Prostate gland (tissue), 2 donors: ENCODE measurements at regions of chr1 and their contacts with region 1.

Region 1: GRCh38 chr1:156129706-156130581 is 15.4 kb downstream of the LMNA start:
- DNase-seq: peak; percentile 82
- H3K4me3 ChIP-seq: no peak overlapping the region
- H3K27ac ChIP-seq: peak overlapping the region; percentile 80 to 86
- H3K4me1 ChIP-seq: peaks cover 23% of the 10 kb centered on the region
- H3K27me3 ChIP-seq: no peaks in the 10 kb centered on the region
- CTCF ChIP-seq: peak; percentile 90 to 100 (median 97)
- POLR2A ChIP-seq: peak; percentile 51

Region 2: GRCh38 chr1:156060937-156061636 is 68.9 kb before region 1 on chr1 and contains the start of gene RAB25:
- intact Hi-C with region 1: no loop called
- DNase-seq: peak; percentile 92
- H3K4me3 ChIP-seq: peak within 1 kb of the TSS; percentile 30 to 35
- H3K27ac ChIP-seq: peak within 1 kb of the TSS; percentile 81
- H3K4me1 ChIP-seq: no peaks in the 10 kb centered on the region
- H3K27me3 ChIP-seq: no peaks in the 10 kb centered on the region
- CTCF ChIP-seq: peak in 1 of 4 experiments; percentile 19
- POLR2A ChIP-seq: peak; percentile 86
- total RNA-seq, gene RAB25: 33.5 to 100 TPM

Region 3: DNA sequence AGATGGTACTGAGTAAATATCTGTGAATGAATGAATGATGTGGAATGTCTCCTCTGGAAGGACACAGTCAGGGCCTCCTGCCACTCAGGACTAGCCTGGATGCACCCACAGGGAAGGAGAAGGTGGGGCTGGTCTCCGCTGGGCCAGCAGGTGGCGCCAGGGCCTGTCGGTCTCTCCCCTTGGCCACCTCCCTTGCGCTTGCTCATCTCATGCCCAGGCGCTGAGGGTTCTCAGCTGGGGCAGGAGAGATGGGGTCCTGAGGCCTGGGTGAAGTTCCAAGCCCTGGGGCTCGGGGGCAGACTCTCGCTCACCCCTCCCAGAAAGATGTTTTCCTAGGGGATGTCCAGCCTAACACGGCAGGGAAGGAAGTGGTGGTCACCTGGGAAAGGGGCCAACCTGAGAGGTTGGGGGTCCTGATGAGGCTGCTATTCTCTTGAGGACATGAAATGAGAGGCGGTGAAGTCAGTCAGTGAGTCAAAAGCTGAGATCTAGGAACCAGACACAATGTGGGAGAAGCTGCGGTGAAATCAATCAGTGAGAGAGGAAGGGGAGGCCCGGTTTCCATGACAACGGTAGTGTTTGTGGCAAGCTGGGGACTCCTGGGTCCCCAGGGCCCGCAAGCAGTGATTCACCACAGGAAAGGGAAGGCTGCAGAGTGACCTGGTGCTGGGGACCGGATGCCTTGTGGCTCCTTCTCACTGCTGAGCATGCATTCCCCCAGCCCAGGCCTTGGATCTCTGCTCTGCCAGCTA is 33.1 kb before region 1 on chr1:
- intact Hi-C with region 1: loop called (anchors 1 kb)
- DNase-seq: peak; percentile 87
- H3K4me3 ChIP-seq: no peak overlapping the region
- H3K27ac ChIP-seq: peak overlapping the region; percentile 21 to 32
- H3K4me1 ChIP-seq: no peaks in the 10 kb centered on the region
- H3K27me3 ChIP-seq: no peaks in the 10 kb centered on the region
- CTCF ChIP-seq: peak; percentile 89 to 98 (median 97)
- POLR2A ChIP-seq: no peak